Activated CD4-positive, alpha-beta T cell treated with anti-CD3 and anti-CD28 coated beads, Interleukin-2, amount 10 ng/mL, durations not matched to agents 7 days and 5 days (primary cell): ENCODE measurements at regions of chr3 and their contacts with region 1.

Region 1: GRCh38 chr3:187974871-187975271 is 179.1 kb upstream of the LPP start:
- DNase-seq: peak; percentile 31
- H3K4me3 Mint-ChIP-seq: peak overlapping the region; percentile 40
- H3K27ac Mint-ChIP-seq: peak overlapping the region; percentile 92
- H3K4me1 Mint-ChIP-seq: peaks cover 68% of the 10 kb centered on the region
- H3K27me3 Mint-ChIP-seq: no peaks in the 10 kb centered on the region

Region 2: DNA sequence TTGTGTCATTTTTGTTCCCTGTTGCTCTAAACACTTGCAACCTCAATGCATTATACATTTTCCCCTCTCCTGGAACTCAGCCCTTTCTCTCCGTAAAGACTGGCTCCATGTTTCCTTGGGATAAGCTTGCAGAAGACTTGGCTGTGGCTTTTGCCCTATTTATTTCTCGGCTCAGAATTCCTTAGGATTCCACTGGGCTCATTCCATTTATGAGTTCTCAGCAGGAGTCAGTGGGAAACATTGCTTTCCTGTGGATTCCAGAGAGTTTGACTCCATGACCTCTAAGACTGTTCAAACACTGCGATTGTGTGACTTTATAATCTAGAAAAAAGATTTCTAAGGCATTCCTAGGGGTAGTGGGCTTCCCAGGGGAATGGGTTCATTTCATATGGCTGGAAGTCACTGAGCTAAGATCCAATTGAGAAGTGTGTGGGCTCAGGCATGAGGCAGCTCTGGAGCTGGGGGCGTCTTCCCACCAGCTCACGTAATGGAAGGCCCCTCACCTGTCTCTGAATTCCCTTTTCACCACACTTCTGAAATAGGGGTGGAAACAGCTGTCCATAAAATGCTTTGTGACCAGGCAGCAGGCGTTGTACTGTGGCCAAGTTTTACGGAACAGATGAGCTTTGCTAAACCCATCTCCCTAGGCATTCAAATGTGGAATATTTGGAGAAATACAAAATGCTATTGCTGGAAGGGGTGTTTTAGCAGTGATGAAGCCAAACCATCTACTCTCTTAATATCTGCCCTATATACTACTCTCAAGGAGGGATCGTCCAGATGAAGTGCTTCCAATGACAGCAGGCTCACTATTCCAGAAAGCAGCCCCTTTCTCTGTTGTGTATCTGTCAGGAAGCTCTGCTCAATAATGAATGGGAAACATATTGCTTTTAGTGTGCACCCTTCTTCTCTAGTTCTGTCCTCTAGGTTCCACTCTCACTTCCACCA is 137.8 kb before region 1 on chr3:
- CTCF ChIA-PET with region 1: no interaction called
- POLR2A ChIA-PET with region 1: no interaction called
- DNase-seq: no peak
- H3K4me3 Mint-ChIP-seq: no peak overlapping the region
- H3K27ac Mint-ChIP-seq: no peak overlapping the region
- H3K4me1 Mint-ChIP-seq: peaks cover 8% of the 10 kb centered on the region
- H3K27me3 Mint-ChIP-seq: no peaks in the 10 kb centered on the region

Region 3: GRCh38 chr3:187932530-187932929 is 42.3 kb before region 1 on chr3:
- CTCF ChIA-PET with region 1: no interaction called
- POLR2A ChIA-PET with region 1: no interaction called
- DNase-seq: no peak
- H3K4me3 Mint-ChIP-seq: no peak overlapping the region
- H3K27ac Mint-ChIP-seq: no peak overlapping the region
- H3K4me1 Mint-ChIP-seq: peaks cover 28% of the 10 kb centered on the region
- H3K27me3 Mint-ChIP-seq: peaks cover 3% of the 10 kb centered on the region

Region 4: DNA sequence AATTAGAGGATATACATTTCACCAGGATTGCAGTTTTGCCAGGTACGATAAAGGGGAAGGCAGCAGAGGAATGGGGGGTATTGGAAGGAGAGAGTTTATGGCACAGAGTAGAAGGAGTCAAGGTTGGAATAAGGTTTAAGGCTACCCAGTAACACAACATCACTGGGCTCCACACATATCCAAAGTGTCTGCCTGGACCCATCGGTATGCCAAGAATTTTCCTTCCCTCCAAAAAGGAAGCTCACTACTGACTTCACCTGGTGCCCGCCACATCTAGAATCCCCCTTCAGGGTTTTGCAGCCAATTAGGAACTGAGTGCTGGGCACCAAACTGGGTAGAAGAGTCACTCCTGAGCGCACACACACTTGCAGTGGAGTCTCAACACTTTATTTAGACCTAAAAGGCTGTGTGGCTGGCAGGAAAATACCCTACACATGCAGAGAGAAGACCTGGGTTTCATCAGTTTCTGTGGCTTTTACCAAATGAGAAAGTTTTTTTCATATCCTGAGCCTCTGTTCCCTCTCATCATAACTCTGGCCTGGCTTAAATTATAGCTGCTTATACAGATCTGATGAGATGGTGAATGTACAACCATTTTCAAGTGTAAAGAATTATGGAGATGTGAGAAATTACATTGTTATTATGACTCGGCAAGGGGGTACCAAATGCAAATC is 11.7 kb before region 1 on chr3:
- CTCF ChIA-PET with region 1: interaction called, 12 read pairs
- POLR2A ChIA-PET with region 1: no interaction called
- DNase-seq: peak; percentile 39
- H3K4me3 Mint-ChIP-seq: no peak overlapping the region
- H3K27ac Mint-ChIP-seq: peak overlapping the region; percentile 36
- H3K4me1 Mint-ChIP-seq: peaks cover 23% of the 10 kb centered on the region
- H3K27me3 Mint-ChIP-seq: peaks cover 7% of the 10 kb centered on the region

Region 5: GRCh38 chr3:187992609-187993008 is 17.7 kb after region 1 on chr3:
- CTCF ChIA-PET with region 1: interaction called, 15 read pairs
- POLR2A ChIA-PET with region 1: interaction called, 3 read pairs
- DNase-seq: no peak
- H3K4me3 Mint-ChIP-seq: no peak overlapping the region
- H3K27ac Mint-ChIP-seq: no peak overlapping the region
- H3K4me1 Mint-ChIP-seq: peaks cover 67% of the 10 kb centered on the region
- H3K27me3 Mint-ChIP-seq: no peaks in the 10 kb centered on the region

Region 6: DNA sequence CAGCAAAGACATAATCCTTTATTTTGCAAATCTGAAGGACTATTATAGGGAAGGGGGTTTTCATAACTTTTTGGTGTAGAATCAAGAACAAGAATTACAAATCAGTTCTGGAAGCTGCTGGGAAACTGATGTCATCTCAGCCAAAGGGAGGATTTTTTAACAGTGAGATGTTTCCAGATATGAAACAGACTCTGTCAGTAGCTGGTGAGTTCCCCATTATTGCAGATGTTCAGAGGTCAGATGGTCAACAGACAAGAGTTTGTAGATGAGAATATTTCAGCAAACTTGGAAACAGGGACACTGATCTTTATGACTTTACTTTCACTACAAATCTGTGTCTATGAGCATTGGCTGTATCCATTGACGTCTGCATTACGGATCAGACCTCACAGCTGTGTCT is 107.2 kb after region 1 on chr3:
- CTCF ChIA-PET with region 1: no interaction called
- POLR2A ChIA-PET with region 1: no interaction called
- DNase-seq: no peak
- H3K4me3 Mint-ChIP-seq: no peak overlapping the region
- H3K27ac Mint-ChIP-seq: no peak overlapping the region
- H3K4me1 Mint-ChIP-seq: peaks cover 3% of the 10 kb centered on the region
- H3K27me3 Mint-ChIP-seq: no peaks in the 10 kb centered on the region

Region 7: DNA sequence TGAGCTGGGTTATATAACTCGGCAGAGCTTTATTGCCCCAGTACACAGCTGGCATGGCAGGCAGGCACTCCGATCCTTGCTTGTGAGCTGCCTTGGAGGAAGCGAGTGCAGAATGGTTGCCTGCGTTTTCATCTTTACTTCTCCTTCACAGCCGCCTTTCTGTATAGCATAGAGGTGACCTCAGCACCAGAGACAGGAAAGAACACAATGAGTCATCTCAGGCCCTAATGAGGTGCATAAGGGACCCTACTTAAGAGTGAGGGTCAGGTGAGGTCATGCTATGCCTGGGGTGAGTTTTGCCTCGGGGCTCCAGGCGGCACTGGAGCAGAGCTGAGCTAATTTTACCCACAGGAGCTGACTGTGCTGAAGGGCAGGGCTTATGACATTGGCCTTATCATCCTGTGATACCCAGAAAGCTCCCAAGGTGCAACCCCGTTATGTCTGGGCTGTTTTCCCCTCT is 222.5 kb after region 1 on chr3:
- CTCF ChIA-PET with region 1: no interaction called
- POLR2A ChIA-PET with region 1: no interaction called
- DNase-seq: no peak
- H3K4me3 Mint-ChIP-seq: no peak overlapping the region
- H3K27ac Mint-ChIP-seq: no peak overlapping the region
- H3K4me1 Mint-ChIP-seq: peaks cover 17% of the 10 kb centered on the region
- H3K27me3 Mint-ChIP-seq: no peaks in the 10 kb centered on the region